Heart right ventricle (tissue), 16 donors: ENCODE measurements at regions of chr7 and their contacts with region 1.

Region 1: DNA sequence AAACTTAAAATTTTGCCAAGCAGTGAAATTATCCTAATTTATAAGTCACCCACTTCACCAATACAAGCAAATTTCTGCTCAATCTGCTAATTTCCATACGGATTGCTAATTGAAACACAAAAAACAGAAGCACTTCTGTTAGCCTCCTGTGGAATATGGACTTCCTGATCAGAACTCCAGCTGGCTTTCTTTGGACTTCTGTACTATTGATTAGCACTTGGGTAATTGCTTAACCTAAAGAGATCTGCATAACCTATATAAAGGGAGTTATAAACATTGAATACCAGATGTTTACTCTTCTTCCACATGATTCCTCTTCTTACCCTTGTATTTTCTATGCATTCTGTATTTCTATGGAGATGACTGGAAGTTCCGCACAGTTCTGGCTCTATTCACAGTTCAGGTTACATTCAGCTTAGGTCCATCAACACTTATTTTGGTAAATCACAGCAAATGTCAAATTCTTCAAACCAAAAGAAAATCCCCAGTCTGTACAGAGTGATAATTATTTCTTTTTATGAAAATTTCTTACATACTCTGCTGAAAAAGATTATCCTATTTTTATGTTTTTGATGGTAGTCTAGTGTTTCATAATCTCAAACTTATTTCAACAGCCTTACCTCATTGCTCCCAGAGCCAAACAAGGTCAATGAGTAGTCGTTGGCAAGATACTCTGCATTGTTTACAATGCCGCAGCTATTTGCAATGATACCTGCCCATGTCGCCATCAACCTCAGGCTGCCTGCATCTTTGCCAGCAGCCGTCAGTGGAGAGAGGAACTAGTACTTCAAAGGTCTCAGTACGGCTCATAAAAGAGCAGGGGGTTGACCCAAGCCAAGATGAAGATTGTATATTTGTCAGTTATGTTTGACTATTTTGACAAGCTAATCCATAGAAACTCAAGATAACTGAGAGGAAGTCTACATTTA is 225.6 kb downstream of the AHR start:
- DNase-seq: no peak
- ATAC-seq: peak in 4 of 8 donors; percentile 46 to 74 (median 65)
- H3K4me3 ChIP-seq: no peak overlapping the region
- H3K27ac ChIP-seq: peak overlapping the region in 5 of 10 donors; percentile 11 to 46 (median 22)
- H3K4me1 ChIP-seq: peaks cover 0 to 45% (median 20%) of the 10 kb centered on the region in 9 donors
- H3K27me3 ChIP-seq: no peaks in the 10 kb centered on the region
- CTCF ChIP-seq: no peak

Region 2: GRCh38 chr7:17311952-17312351 is 212.1 kb before region 1 on chr7:
- intact Hi-C with region 1: loop called in 3 of 10 experiments (anchors 5 to 10 kb)
- DNase-seq: no peak
- ATAC-seq: peak in 3 of 8 donors; percentile 35 to 41 (median 38)
- H3K4me3 ChIP-seq: no peak overlapping the region
- H3K27ac ChIP-seq: peak overlapping the region in 6 of 10 donors; percentile 22 to 71 (median 59)
- H3K4me1 ChIP-seq: peaks cover 3 to 88% (median 50%) of the 10 kb centered on the region in 9 donors
- H3K27me3 ChIP-seq: no peaks in the 10 kb centered on the region
- CTCF ChIP-seq: no peak